Tibial artery (tissue), 4 donors: ENCODE measurements at regions of chr15 and their contacts with region 1.

Region 1: GRCh38 chr15:72155635-72156616 is 37.7 kb downstream of the SENP8 start:
- DNase-seq: peak; percentile 86 to 90
- H3K4me3 ChIP-seq: peak overlapping the region; percentile 49 to 54
- H3K27ac ChIP-seq: peak overlapping the region; percentile 49 to 63
- H3K4me1 ChIP-seq: peaks cover 0 to 12% (median 3%) of the 10 kb centered on the region in 4 donors
- H3K27me3 ChIP-seq: no peaks in the 10 kb centered on the region
- CTCF ChIP-seq: peak; percentile 77 to 86

Region 2: GRCh38 chr15:71800835-71801745 is 354.8 kb before region 1 on chr15:
- intact Hi-C with region 1: loop called (anchors 10 kb)
- DNase-seq: no peak
- H3K4me3 ChIP-seq: no peak overlapping the region
- H3K27ac ChIP-seq: no peak overlapping the region
- H3K4me1 ChIP-seq: no peaks in the 10 kb centered on the region
- H3K27me3 ChIP-seq: no peaks in the 10 kb centered on the region
- CTCF ChIP-seq: peak; percentile 90 to 97

Region 3: GRCh38 chr15:74053941-74054529 is 1898.1 kb after region 1 on chr15:
- intact Hi-C with region 1: no loop called
- DNase-seq: peak; percentile 82 to 90
- H3K4me3 ChIP-seq: peak overlapping the region; percentile 3 to 23
- H3K27ac ChIP-seq: peak overlapping the region; percentile 49 to 62
- H3K4me1 ChIP-seq: peaks cover 0 to 57% (median 38%) of the 10 kb centered on the region in 4 donors
- H3K27me3 ChIP-seq: no peaks in the 10 kb centered on the region
- CTCF ChIP-seq: peak; percentile 59 to 73